ENCODE measurements at regions of chr2 and their contacts with region 1.

Region 1: GRCh38 chr2:32264422-32265105 is at the start of gene NLRC4:
- DNase-seq: peak; percentile 86 to 94 (median 93)
- H3K4me3 ChIP-seq: peak within 1 kb of the TSS; percentile 67 to 99 (median 86)
- H3K4me3 Mint-ChIP-seq: peak within 1 kb of the TSS; percentile 86 to 96
- H3K27ac ChIP-seq: peak within 1 kb of the TSS; percentile 93 to 95
- H3K27ac Mint-ChIP-seq: peak within 1 kb of the TSS; percentile 93 to 98 (median 97)
- H3K4me1 ChIP-seq: peaks cover 47 to 66% of the 10 kb centered on the region in 2 donors
- H3K4me1 Mint-ChIP-seq: peaks cover 62% of the 10 kb centered on the region
- H3K27me3 ChIP-seq: no peaks in the 10 kb centered on the region
- H3K27me3 Mint-ChIP-seq: no peaks in the 10 kb centered on the region
- CTCF ChIP-seq: no peak
- polyA plus RNA-seq, gene NLRC4: 18.8 to 38.3 (median 27.3) TPM

Region 2: DNA sequence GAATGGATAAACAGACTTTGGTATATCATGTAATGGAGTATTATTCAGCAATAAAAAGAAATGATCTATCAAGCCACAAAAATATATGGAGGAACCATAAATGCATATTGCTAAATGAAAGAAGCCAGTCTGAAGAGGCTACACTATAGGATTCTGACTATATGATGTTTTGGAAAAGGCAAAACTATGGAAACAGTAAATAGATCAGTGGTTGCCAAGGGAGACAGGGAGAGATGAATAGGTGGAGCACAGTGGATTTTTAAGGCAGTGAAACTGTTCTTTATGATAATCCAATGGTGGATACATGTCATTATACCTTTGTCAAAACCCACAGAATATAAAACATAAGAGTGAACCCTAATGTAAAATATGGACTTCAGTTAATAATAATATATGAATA is 139.9 kb before region 1 on chr2:
- intact Hi-C with region 1: no loop called
- DNase-seq: no peak
- H3K4me3 ChIP-seq: no peak overlapping the region
- H3K4me3 Mint-ChIP-seq: no peak overlapping the region
- H3K27ac ChIP-seq: no peak overlapping the region
- H3K27ac Mint-ChIP-seq: peak overlapping the region in 2 of 7 donors; percentile 32 to 33
- H3K4me1 ChIP-seq: no peaks in the 10 kb centered on the region
- H3K4me1 Mint-ChIP-seq: no peaks in the 10 kb centered on the region
- H3K27me3 ChIP-seq: no peaks in the 10 kb centered on the region
- H3K27me3 Mint-ChIP-seq: peaks cover 0 to 2% (median 0%) of the 10 kb centered on the region in 3 donors
- CTCF ChIP-seq: no peak

Region 3: GRCh38 chr2:32356735-32357644 is 92.4 kb after region 1 on chr2 and contains the start of gene BIRC6:
- intact Hi-C with region 1: loop called (anchors 5 to 10 kb)
- DNase-seq: peak; percentile 95 to 99 (median 98)
- H3K4me3 ChIP-seq: peak within 1 kb of the TSS; percentile 89 to 94 (median 89)
- H3K4me3 Mint-ChIP-seq: peak within 1 kb of the TSS; percentile 91 to 94
- H3K27ac ChIP-seq: peak within 1 kb of the TSS; percentile 96 to 99
- H3K27ac Mint-ChIP-seq: peak within 1 kb of the TSS; percentile 94 to 98 (median 96)
- H3K4me1 ChIP-seq: peaks cover 26% of the 10 kb centered on the region in 2 donors
- H3K4me1 Mint-ChIP-seq: peaks cover 34% of the 10 kb centered on the region
- H3K27me3 ChIP-seq: no peaks in the 10 kb centered on the region
- H3K27me3 Mint-ChIP-seq: peaks cover 0 to 2% (median 0%) of the 10 kb centered on the region in 3 donors
- CTCF ChIP-seq: no peak
- polyA plus RNA-seq, gene BIRC6: 11.5 to 32.6 (median 12.9) TPM

Region 4: DNA sequence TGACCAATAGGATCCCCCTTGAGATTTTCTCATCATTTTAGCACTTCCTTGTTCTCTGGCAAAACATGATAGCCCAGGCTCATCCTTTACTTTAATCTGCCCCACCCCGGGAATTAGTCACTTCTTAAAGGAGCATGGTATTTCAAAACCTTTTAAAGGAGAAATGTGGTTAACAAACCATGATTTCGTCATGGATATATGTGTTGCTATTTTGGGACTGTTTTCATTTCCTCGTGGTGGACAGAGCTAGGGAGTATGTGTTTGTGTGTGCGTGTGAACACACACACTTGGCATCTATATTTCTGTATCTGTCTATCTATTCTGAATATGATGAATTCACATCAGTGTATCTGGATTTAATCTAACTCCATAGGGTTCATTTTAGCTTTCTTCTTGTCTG is 220.4 kb after region 1 on chr2:
- intact Hi-C with region 1: loop called (anchors 10 kb)
- DNase-seq: peak; percentile 92 to 97 (median 96)
- H3K4me3 ChIP-seq: peak overlapping the region in 1 of 3 experiments; percentile 6
- H3K4me3 Mint-ChIP-seq: peak overlapping the region in 1 of 2 donors; percentile 43
- H3K27ac ChIP-seq: peak overlapping the region; percentile 66 to 82
- H3K27ac Mint-ChIP-seq: peak overlapping the region; percentile 85 to 97 (median 95)
- H3K4me1 ChIP-seq: peaks cover 24 to 25% of the 10 kb centered on the region in 2 donors
- H3K4me1 Mint-ChIP-seq: peaks cover 18% of the 10 kb centered on the region
- H3K27me3 ChIP-seq: no peaks in the 10 kb centered on the region
- H3K27me3 Mint-ChIP-seq: no peaks in the 10 kb centered on the region
- CTCF ChIP-seq: no peak

Measured in CD14-positive monocyte (primary cell).